HepG2 (cell line): ENCODE measurements at regions of chr1 and their contacts with region 1.

Region 1: GRCh38 chr1:206982216-206982615 is 12.0 kb upstream of the FCAMR start:
- DNase-seq: peak; percentile 56
- ATAC-seq: peak; percentile 97
- H3K4me3 ChIP-seq: no peak overlapping the region
- H3K27ac ChIP-seq: no peak overlapping the region
- H3K4me1 ChIP-seq: no peaks in the 10 kb centered on the region
- H3K27me3 ChIP-seq: peaks cover 3 to 30% of the 10 kb centered on the region in 2 experiments; a peak in 4 of 5 replicates
- CTCF ChIP-seq: peak; percentile 88
- EP300 ChIP-seq: no peak
- POLR2A ChIP-seq: no peak
- RAD21 ChIP-seq: peak; percentile 77

Region 2: DNA sequence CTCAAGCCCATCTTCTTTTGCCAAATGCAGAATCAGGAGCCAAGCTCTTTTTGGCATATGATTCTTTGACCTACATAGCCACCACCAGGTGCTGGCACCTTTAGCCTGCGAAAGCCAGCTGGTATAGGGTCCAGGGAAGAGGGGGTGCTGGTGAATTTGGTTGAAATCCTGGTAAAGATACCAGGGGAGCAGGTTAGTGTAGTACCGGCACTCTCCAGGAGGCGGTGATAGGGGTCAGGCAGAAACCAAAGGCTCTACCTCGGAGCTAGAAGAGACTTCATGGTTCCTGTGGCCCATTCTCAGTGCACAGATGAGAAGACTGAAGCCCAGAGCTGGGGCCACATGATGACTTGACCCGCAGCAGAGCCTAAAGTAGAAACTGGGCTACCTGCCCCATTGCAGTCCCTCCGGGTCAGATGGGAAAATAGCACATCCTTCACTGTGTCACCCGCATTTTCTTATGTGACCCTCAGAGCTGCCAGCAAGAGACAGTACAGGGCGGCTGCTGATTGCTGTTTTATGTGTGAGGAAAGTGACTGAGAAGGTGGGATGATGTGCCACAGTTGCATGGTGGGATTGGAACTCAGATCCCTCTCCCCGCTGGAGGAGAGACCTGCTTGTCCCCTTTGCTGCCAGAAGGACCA is 247.6 kb before region 1 on chr1:
- CTCF ChIA-PET with region 1: interaction called, 4 read pairs
- POLR2A ChIA-PET with region 1: no interaction called
- in situ Hi-C with region 1: loop called (anchors 10 kb)
- intact Hi-C with region 1: loop called (anchors 1 kb)
- DNase-seq: no peak
- ATAC-seq: peak; percentile 66
- H3K4me3 ChIP-seq: no peak overlapping the region
- H3K27ac ChIP-seq: no peak overlapping the region
- H3K4me1 ChIP-seq: no peaks in the 10 kb centered on the region
- H3K27me3 ChIP-seq: no peaks in the 10 kb centered on the region
- CTCF ChIP-seq: peak; percentile 70
- EP300 ChIP-seq: no peak
- POLR2A ChIP-seq: no peak
- RAD21 ChIP-seq: peak; percentile 41; the same call in 1 of the 2 replicates

Region 3: DNA sequence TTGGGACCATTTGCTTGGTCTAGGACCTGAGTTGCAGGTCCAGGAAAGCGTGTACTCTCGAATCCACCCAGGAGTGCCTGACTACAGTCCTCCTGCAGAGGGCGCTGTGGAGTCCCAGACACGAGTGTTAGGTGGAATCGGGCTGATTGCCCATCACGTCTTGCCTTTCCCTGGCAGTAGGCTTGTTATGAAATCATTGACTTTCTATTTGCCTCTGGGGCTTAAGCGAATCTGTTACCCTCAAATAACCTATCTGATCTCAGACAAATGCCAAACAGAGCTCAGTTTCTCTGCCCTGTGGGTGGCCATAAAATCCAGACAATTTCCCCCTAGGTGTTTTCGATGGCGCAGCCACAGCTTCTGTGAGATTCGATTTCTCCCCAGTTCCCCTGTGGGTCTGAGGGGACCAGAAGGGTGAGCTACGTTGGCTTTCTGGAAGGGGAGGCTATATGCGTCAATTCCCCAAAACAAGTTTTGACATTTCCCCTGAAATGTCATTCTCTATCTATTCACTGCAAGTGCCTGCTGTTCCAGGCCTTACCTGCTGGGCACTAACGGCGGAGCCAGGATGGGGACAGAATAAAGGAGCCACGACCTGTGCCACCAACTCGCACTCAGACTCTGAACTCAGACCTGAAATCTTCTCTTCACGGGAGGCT is 117.1 kb before region 1 on chr1 and contains the start of gene IL20:
- CTCF ChIA-PET with region 1: no interaction called
- POLR2A ChIA-PET with region 1: no interaction called
- in situ Hi-C with region 1: no loop called
- intact Hi-C with region 1: loop called (anchors 1 kb)
- DNase-seq: peak; percentile 36
- ATAC-seq: peak; percentile 77
- H3K4me3 ChIP-seq: no peak within 1 kb of the TSS
- H3K27ac ChIP-seq: no peak within 1 kb of the TSS
- H3K4me1 ChIP-seq: no peaks in the 10 kb centered on the region
- H3K27me3 ChIP-seq: peaks cover 0 to 8% of the 10 kb centered on the region in 2 experiments; a peak in 2 of 5 replicates
- CTCF ChIP-seq: peak; percentile 75
- EP300 ChIP-seq: no peak
- POLR2A ChIP-seq: no peak
- RAD21 ChIP-seq: no peak
- total RNA-seq, gene IL20: not detected in 2 replicates

Region 4: GRCh38 chr1:206935491-206936067 is 46.6 kb before region 1 on chr1:
- CTCF ChIA-PET with region 1: interaction called, 87 read pairs
- POLR2A ChIA-PET with region 1: no interaction called
- in situ Hi-C with region 1: loop called (anchors 5 kb)
- intact Hi-C with region 1: loop called (anchors 1 kb)
- DNase-seq: peak; percentile 69
- ATAC-seq: peak; percentile 99
- H3K4me3 ChIP-seq: no peak overlapping the region
- H3K27ac ChIP-seq: no peak overlapping the region
- H3K4me1 ChIP-seq: no peaks in the 10 kb centered on the region
- H3K27me3 ChIP-seq: peaks cover 2 to 6% of the 10 kb centered on the region in 2 experiments; a peak in 3 of 5 replicates
- CTCF ChIP-seq: peak; percentile 96
- EP300 ChIP-seq: no peak
- POLR2A ChIP-seq: no peak
- RAD21 ChIP-seq: peak; percentile 93

Region 5: DNA sequence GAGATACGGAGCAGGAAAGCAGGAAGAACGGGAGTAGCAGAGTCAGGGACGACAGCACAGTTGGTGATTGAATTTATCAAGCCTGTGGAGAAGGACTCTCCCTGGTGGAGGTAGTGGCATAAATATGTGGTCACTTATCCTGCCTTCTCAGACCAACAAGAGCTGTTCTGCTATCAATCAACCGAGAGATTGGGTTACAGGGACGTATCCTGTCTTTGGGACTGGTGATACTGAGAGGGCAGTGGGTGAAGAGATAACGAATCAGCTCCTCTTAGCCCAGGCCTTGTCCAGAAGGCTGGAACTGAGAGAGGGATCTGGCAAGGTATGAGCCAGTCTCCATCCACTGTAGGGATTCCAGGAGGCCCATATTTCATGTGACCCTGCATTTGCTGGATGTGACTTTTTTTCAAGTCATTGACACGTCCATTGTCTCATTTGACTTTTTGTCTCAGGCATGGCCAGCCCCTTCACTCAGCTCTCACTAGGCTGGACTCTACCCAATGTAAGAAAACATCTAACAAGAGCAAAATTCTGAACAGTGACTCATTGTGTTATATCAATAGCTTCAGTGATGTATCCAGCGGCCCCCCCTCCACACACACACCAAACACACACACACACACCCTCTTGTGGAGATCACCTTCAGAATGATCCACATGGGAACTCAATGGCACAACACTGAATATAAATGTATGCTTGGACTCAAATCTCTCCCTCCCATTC is 39.1 kb after region 1 on chr1:
- CTCF ChIA-PET with region 1: no interaction called
- POLR2A ChIA-PET with region 1: no interaction called
- in situ Hi-C with region 1: no loop called
- intact Hi-C with region 1: loop called (anchors 1 kb)
- DNase-seq: peak; percentile 89
- ATAC-seq: peak; percentile 67
- H3K4me3 ChIP-seq: peak overlapping the region in 1 of 3 experiments; percentile 17; a peak in 1 of 6 replicates
- H3K27ac ChIP-seq: peak overlapping the region; percentile 56
- H3K4me1 ChIP-seq: peaks cover 77% of the 10 kb centered on the region
- H3K27me3 ChIP-seq: no peaks in the 10 kb centered on the region
- CTCF ChIP-seq: peak; percentile 45
- EP300 ChIP-seq: no peak; a peak in 1 of 4 replicates
- POLR2A ChIP-seq: no peak
- RAD21 ChIP-seq: no peak